Mammary epithelial cell (primary cell): ENCODE measurements at regions of chr1 and their contacts with region 1.

Region 1: GRCh38 chr1:207221934-207222351 is 99.5 kb upstream of the CD55 start:
- DNase-seq: peak; percentile 80
- H3K4me3 ChIP-seq: no peak overlapping the region
- H3K27ac ChIP-seq: peak overlapping the region; percentile 14
- H3K4me1 ChIP-seq: peaks cover 28% of the 10 kb centered on the region
- H3K27me3 ChIP-seq: no peaks in the 10 kb centered on the region
- CTCF ChIP-seq: no peak

Region 2: GRCh38 chr1:206935491-206936067 is 286.4 kb before region 1 on chr1:
- CTCF ChIA-PET with region 1: no interaction called
- dilution Hi-C with region 1: no loop called
- in situ Hi-C with region 1: no loop called
- intact Hi-C with region 1: no loop called
- DNase-seq: no peak
- H3K4me3 ChIP-seq: no peak overlapping the region
- H3K27ac ChIP-seq: no peak overlapping the region
- H3K4me1 ChIP-seq: peaks cover 22% of the 10 kb centered on the region
- H3K27me3 ChIP-seq: no peaks in the 10 kb centered on the region
- CTCF ChIP-seq: peak; percentile 21 to 26

Region 3: GRCh38 chr1:207240325-207241095 is 18.6 kb after region 1 on chr1:
- CTCF ChIA-PET with region 1: no interaction called
- dilution Hi-C with region 1: no loop called
- in situ Hi-C with region 1: no loop called
- intact Hi-C with region 1: loop called (anchors 1 kb)
- DNase-seq: peak; percentile 98
- H3K4me3 ChIP-seq: peak overlapping the region in 1 of 3 experiments; percentile 0
- H3K27ac ChIP-seq: peak overlapping the region; percentile 87
- H3K4me1 ChIP-seq: peaks cover 23% of the 10 kb centered on the region
- H3K27me3 ChIP-seq: no peaks in the 10 kb centered on the region
- CTCF ChIP-seq: no peak

Region 4: DNA sequence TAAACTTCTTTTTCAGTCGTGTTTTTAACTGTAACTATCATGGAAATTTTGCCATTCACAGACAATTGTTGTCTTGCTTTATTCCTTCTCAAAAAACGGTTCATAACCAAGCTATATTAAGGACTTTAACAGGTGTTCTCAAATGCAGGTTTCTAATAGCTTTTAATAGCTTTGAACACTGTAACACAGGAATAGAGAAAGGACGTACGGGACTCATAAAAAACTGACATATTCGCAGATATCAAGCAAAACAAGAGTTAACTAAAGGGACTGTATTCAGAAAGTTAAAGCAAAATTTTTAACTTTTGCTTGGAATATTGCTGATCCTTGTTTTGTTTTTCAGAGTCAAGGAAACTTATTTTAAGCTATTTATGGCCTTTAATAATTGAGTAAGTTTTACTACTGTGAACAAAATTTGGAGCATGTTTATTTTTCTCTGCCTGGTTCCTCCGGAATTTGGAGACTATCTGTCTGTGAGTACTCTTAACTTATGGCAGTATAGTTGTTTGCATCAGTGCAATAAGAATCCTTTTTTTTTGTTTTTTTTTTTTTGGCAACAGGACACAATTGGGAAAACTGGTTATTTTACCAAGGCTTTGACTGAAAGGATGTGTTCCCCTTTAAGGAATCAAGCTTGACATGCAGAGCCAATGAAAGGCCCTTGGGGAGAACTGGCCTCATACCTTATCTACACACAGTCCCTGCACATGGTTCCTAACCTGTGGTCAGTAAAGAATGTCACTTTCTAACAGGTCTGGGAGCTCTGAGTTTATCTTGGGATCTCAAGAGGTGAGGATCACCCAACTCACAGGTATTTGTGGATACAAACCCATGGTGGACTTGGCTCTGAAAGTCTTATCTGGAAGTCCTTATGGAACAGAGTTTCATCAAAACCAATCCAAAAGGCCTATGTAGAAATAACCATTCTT is 524.2 kb after region 1 on chr1:
- CTCF ChIA-PET with region 1: interaction called, 13 read pairs
- dilution Hi-C with region 1: no loop called
- in situ Hi-C with region 1: no loop called
- intact Hi-C with region 1: no loop called
- DNase-seq: no peak
- H3K4me3 ChIP-seq: no peak overlapping the region
- H3K27ac ChIP-seq: no peak overlapping the region
- H3K4me1 ChIP-seq: peaks cover 27% of the 10 kb centered on the region
- H3K27me3 ChIP-seq: no peaks in the 10 kb centered on the region
- CTCF ChIP-seq: no peak